BJ (cell line): ENCODE measurements at regions of chr6 and their contacts with region 1.

Region 1: GRCh38 chr6:722077-722524 is 29.2 kb upstream of the EXOC2 start:
- DNase-seq: no peak
- H3K4me3 ChIP-seq: no peak overlapping the region
- H3K27me3 ChIP-seq: peaks cover 7% of the 10 kb centered on the region
- CTCF ChIP-seq: peak; percentile 97

Region 2: GRCh38 chr6:683742-684440 is 38.2 kb before region 1 on chr6:
- CTCF ChIA-PET with region 1: interaction called, 10 read pairs
- POLR2A ChIA-PET with region 1: no interaction called
- DNase-seq: no peak
- H3K4me3 ChIP-seq: peak overlapping the region; percentile 38
- H3K27me3 ChIP-seq: no peaks in the 10 kb centered on the region
- CTCF ChIP-seq: no peak

Region 3: GRCh38 chr6:733431-734219 is 11.5 kb after region 1 on chr6:
- CTCF ChIA-PET with region 1: interaction called, 22 read pairs
- POLR2A ChIA-PET with region 1: no interaction called
- DNase-seq: no peak
- H3K4me3 ChIP-seq: no peak overlapping the region
- H3K27me3 ChIP-seq: peaks cover 2% of the 10 kb centered on the region; the same call in 1 of the 2 replicates
- CTCF ChIP-seq: no peak

Region 4: GRCh38 chr6:760982-761955 is 39.2 kb after region 1 on chr6:
- CTCF ChIA-PET with region 1: interaction called, 13 read pairs
- POLR2A ChIA-PET with region 1: no interaction called
- DNase-seq: no peak
- H3K4me3 ChIP-seq: peak overlapping the region; percentile 38
- H3K27me3 ChIP-seq: peaks cover 2% of the 10 kb centered on the region; the same call in 1 of the 2 replicates
- CTCF ChIP-seq: peak; percentile 30